ENCODE measurements at regions of chr16 and their contacts with region 1.

Region 1: GRCh38 chr16:51971184-51971583 is 575.8 kb downstream of the TOX3 start:
- DNase-seq: no peak
- ATAC-seq: peak; percentile 65
- H3K4me3 ChIP-seq: no peak overlapping the region
- H3K27ac ChIP-seq: no peak overlapping the region
- H3K4me1 ChIP-seq: no peaks in the 10 kb centered on the region
- H3K27me3 ChIP-seq: no peaks in the 10 kb centered on the region; a peak in 2 of 5 replicates
- CTCF ChIP-seq: peak; percentile 41
- EP300 ChIP-seq: no peak
- POLR2A ChIP-seq: no peak
- RAD21 ChIP-seq: no peak

Region 2: GRCh38 chr16:51388516-51388951 is 582.6 kb before region 1 on chr16:
- CTCF ChIA-PET with region 1: no interaction called
- POLR2A ChIA-PET with region 1: no interaction called
- in situ Hi-C with region 1: loop called (anchors 10 kb)
- intact Hi-C with region 1: no loop called
- DNase-seq: no peak
- ATAC-seq: no peak
- H3K4me3 ChIP-seq: no peak overlapping the region
- H3K27ac ChIP-seq: no peak overlapping the region
- H3K4me1 ChIP-seq: no peaks in the 10 kb centered on the region
- H3K27me3 ChIP-seq: no peaks in the 10 kb centered on the region
- CTCF ChIP-seq: no peak
- EP300 ChIP-seq: no peak
- POLR2A ChIP-seq: no peak
- RAD21 ChIP-seq: no peak